ENCODE measurements at regions of chr22 and their contacts with region 1.

Region 1: GRCh38 chr22:44211946-44212930 is 31.5 kb downstream of the PARVG start:
- DNase-seq: peak in 1 of 2 donors; percentile 84
- ATAC-seq: peak; percentile 63
- H3K4me3 ChIP-seq: no peak overlapping the region
- H3K27ac ChIP-seq: peak overlapping the region; percentile 11 to 53
- H3K4me1 ChIP-seq: no peaks in the 10 kb centered on the region
- H3K27me3 ChIP-seq: no peaks in the 10 kb centered on the region

Region 2: GRCh38 chr22:44329179-44329796 is 117.0 kb after region 1 on chr22:
- intact Hi-C with region 1: loop called in 1 of 2 experiments (anchors 10 kb)
- DNase-seq: no peak
- ATAC-seq: no peak
- H3K4me3 ChIP-seq: no peak overlapping the region
- H3K27ac ChIP-seq: no peak overlapping the region
- H3K4me1 ChIP-seq: no peaks in the 10 kb centered on the region
- H3K27me3 ChIP-seq: no peaks in the 10 kb centered on the region